Ovary (tissue), 10 donors: ENCODE measurements at regions of chr22 and their contacts with region 1.

Region 1: DNA sequence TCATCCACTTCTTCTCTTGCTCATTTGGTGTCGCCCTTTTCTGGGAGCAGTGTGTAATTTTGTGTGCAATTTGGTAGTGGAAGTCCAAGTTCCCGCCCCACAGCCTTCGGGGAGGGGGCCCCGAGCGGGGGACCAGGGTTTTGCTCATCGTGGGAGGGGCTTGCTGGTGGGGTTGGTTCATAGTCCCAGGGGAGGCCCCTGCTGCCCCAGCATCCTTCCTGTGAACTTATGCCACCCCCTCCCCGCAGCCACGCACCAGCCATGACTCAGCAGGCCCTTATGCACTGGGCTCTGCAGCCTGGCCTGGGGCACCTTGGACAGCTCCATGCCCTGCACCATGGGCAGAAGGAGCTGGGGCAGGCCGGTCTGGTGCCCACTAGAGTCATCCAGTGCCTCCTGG is 1183.6 kb downstream of the BRD1 start:
- DNase-seq: peak in 1 of 5 donors; percentile 48
- H3K4me3 ChIP-seq: no peak overlapping the region
- H3K27ac ChIP-seq: no peak overlapping the region
- H3K4me1 ChIP-seq: peaks cover 9% of the 10 kb centered on the region
- H3K27me3 ChIP-seq: no peaks in the 10 kb centered on the region
- CTCF ChIP-seq: no peak
- EP300 ChIP-seq: no peak
- POLR2A ChIP-seq: no peak

Region 2: DNA sequence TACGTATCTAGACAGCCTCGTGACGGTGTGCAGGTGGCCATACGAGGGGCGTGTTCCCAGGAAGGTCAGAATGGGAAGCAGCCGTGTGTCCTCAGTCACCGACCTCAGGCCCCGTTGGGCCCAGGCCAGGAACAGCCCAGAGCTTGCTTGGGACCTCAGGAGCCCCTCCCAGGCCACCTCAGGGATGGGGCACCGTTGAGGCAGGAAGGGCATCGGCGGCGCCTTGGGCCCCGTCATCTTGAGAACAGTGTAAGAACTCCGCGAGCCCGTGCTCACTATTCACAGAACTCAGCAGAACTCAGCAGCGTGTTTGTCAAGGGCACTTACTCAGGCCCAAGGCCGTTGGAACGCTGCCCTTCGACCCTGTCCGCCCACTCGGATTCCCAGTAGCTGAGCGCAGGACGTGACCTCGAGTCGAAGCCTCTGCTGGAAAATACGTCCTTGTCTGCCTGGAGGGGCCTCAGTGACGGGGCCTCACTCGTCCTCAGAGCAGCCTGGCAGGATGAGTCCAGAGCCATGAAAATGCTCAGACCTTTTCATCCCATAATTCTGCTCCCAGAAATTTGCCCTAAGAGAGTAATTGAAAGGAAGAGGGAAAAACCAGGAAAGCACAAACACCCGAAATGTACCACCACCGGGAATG is 48.7 kb after region 1 on chr22:
- intact Hi-C with region 1: loop called in 1 of 4 experiments (anchors 5 kb)
- DNase-seq: peak; percentile 78 to 89 (median 85)
- H3K4me3 ChIP-seq: no peak overlapping the region
- H3K27ac ChIP-seq: peak overlapping the region in 1 of 2 donors; percentile 68
- H3K4me1 ChIP-seq: peaks cover 10% of the 10 kb centered on the region
- H3K27me3 ChIP-seq: no peaks in the 10 kb centered on the region
- CTCF ChIP-seq: no peak
- EP300 ChIP-seq: no peak
- POLR2A ChIP-seq: no peak